ENCODE measurements at regions of chr6 and their contacts with region 1.

Region 1: GRCh38 chr6:75208298-75209183 is 2.7 kb upstream of the COL12A1 start:
- DNase-seq: no peak
- H3K4me3 ChIP-seq: peak overlapping the region; percentile 29 to 85 (median 42)
- H3K27ac ChIP-seq: peak overlapping the region; percentile 28 to 95 (median 77)
- H3K4me1 ChIP-seq: peaks cover 44 to 60% (median 55%) of the 10 kb centered on the region in 4 donors
- H3K27me3 ChIP-seq: peaks cover 0 to 6% (median 0%) of the 10 kb centered on the region in 4 donors
- CTCF ChIP-seq: peak; percentile 87 to 89 (median 88)
- EP300 ChIP-seq: no peak
- POLR2A ChIP-seq: no peak

Region 2: DNA sequence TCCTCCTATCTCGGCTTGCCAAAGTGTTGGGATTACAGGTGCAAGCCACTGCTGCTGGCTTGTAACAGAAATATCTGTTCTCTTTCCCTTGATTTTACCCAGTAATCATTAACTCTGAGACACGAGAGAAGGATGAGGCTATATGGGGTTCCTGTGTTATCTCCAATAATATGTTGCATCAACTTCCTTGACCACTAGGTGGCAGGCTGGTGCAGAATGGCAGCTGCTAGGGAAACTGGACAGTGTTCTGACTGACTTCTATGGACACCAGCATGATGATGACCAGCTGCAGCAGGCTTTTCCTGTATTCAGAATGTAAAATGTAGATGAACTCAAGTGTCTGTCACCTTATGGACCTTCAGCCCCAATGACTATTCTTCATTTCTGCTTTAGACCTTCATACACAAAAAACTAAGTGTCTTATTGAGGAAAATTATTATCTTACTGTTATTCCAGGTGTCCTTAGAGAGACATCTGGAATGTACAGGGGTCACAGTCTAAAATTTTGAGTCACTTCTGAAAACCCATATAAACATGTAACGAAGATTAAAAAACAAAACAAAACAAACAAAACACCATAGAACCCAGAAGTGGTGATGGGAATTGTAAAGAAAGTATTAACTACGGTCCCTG is 1533.0 kb before region 1 on chr6:
- intact Hi-C with region 1: loop called (anchors 5 kb)
- DNase-seq: peak; percentile 94
- H3K4me3 ChIP-seq: no peak overlapping the region
- H3K27ac ChIP-seq: no peak overlapping the region
- H3K4me1 ChIP-seq: peaks cover 0 to 3% (median 0%) of the 10 kb centered on the region in 4 donors
- H3K27me3 ChIP-seq: no peaks in the 10 kb centered on the region
- CTCF ChIP-seq: peak; percentile 83 to 90 (median 87)
- EP300 ChIP-seq: no peak
- POLR2A ChIP-seq: no peak

Region 3: DNA sequence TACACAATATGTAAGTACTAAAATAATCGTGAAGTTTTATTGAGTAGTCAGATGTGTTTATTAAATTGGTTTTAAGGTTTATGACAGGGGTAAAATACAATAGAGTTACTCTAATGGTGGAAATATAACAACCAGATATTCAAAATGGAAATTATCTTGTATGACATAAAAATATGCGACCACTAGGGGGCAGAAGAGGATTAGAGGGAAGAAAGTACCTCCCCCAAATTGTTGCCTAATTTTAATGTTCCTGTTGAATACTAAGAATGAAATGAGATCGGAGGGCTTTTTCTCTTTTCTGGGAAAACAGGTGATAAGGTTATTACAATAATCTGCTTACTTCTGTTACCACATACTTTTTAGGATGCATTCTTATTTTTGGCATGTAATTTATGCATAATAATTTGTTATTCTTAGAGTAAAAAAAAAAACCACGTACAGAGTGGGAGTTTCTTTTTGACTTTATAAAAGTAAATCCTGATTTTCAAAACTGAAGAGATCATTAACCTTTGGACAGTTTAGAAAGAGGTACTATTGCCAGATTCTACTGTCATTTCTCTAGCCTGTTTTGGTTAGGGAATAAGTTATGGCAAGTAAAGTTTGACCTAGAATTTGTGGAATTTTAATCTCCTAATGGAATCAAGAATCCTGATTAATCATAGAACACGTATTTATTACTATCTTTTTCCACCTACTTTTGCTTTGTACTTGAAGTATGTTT is 1353.4 kb before region 1 on chr6:
- intact Hi-C with region 1: loop called (anchors 2 kb)
- DNase-seq: no peak
- H3K4me3 ChIP-seq: peak overlapping the region; percentile 20 to 40 (median 27)
- H3K27ac ChIP-seq: peak overlapping the region; percentile 4 to 59 (median 46)
- H3K4me1 ChIP-seq: peaks cover 0 to 18% (median 12%) of the 10 kb centered on the region in 4 donors
- H3K27me3 ChIP-seq: no peaks in the 10 kb centered on the region
- CTCF ChIP-seq: peak; percentile 68 to 88 (median 85)
- EP300 ChIP-seq: no peak
- POLR2A ChIP-seq: no peak

Region 4: DNA sequence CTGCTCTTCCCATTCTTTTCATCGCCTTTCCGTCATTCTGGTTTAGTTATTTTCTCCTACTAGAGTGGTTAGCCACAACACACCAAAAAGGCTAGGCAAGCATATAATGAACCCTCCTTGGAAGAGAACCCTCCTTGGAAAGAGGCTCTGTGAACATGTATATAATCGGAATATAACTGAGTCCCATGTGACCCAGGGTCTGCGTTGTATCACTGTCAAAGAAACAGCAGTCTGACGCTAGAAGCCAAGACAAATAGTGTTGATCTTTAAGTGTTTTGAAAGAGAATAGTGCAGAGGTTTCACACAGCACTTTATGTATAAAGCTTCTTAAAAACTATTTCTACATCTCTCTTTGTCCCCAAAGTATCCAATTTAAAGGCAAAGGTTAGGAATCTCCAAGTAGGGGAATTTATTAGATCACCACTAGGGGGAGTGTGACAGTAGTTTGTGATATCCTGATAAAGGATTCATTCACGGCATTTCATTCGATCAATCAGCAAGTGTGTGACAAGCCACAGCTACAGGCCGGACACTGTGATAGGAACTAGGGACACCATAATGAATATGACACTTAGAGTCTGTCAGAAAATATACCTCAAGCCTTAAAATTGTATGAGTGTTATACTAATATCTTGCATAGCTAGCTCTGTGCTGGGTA is 1117.3 kb before region 1 on chr6:
- intact Hi-C with region 1: loop called (anchors 1 kb)
- DNase-seq: no peak
- H3K4me3 ChIP-seq: no peak overlapping the region
- H3K27ac ChIP-seq: peak overlapping the region in 2 of 4 donors; percentile 14 to 39
- H3K4me1 ChIP-seq: peaks cover 6 to 13% (median 13%) of the 10 kb centered on the region in 4 donors
- H3K27me3 ChIP-seq: no peaks in the 10 kb centered on the region
- CTCF ChIP-seq: peak; percentile 62 to 71 (median 67)
- EP300 ChIP-seq: no peak
- POLR2A ChIP-seq: no peak

Region 5: DNA sequence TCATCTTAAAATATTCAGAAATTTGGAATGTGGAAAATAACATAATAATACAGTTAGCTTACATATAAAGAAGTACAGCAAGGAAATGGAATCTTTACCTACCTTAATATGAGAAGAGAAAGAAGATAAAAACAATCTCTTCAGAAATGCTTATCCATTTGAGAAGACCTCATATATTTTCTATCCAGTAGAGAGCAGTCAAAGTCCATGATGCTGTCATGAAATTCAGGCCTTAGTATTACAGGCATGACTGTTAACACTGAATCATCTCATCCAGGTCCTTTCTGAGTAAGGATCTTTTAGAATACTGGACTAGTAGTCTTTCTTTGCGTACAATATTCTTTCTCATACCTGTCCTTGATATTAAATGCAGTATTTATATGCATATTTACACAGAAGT is 799.1 kb before region 1 on chr6:
- intact Hi-C with region 1: loop called (anchors 2 kb)
- DNase-seq: no peak
- H3K4me3 ChIP-seq: no peak overlapping the region
- H3K27ac ChIP-seq: peak overlapping the region in 1 of 4 donors; percentile 17
- H3K4me1 ChIP-seq: peaks cover 0 to 9% (median 0%) of the 10 kb centered on the region in 4 donors
- H3K27me3 ChIP-seq: no peaks in the 10 kb centered on the region
- CTCF ChIP-seq: peak; percentile 62 to 69 (median 63)
- EP300 ChIP-seq: no peak
- POLR2A ChIP-seq: no peak

Region 6: GRCh38 chr6:74768120-74768519 is 440.4 kb before region 1 on chr6:
- intact Hi-C with region 1: loop called (anchors 10 kb)
- DNase-seq: no peak
- H3K4me3 ChIP-seq: no peak overlapping the region
- H3K27ac ChIP-seq: no peak overlapping the region
- H3K4me1 ChIP-seq: no peaks in the 10 kb centered on the region
- H3K27me3 ChIP-seq: no peaks in the 10 kb centered on the region
- CTCF ChIP-seq: no peak
- EP300 ChIP-seq: no peak
- POLR2A ChIP-seq: no peak

Region 7: DNA sequence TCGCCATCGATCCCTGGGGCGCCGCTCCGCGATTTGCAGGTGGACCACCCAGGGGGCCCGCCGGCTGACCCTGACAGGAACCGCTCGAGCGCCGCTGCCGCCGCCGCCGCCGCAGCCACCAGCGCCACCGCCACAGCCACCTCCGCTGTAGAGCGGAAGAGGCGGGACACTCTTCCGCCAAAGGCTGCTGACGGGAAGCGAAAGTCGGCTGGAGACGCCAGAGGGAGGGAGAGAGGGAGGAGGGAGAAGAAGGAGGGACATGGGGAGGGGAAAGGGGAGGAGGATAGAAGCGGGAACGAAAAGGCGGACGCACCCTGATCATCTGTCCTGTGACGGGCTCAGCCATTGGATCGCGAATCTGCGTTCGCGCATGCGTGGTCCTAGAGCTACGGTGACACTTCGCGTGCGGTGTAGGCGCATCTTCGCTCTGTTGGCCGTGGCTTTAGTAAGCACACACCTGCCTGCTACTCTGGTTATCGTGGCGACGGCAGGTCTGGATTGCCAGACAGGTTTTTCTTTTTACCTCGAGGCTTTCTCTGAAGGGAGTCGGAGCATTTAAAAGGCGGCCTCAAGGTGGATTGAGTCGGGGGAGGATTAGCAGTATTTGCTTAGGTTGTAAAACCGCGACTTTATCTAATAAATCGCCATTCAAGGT is 76.2 kb after region 1 on chr6 and contains the start of gene TMEM30A:
- intact Hi-C with region 1: no loop called
- DNase-seq: peak; percentile 99
- H3K4me3 ChIP-seq: peak within 1 kb of the TSS; percentile 76 to 94 (median 84)
- H3K27ac ChIP-seq: peak within 1 kb of the TSS; percentile 89 to 93 (median 92)
- H3K4me1 ChIP-seq: peaks cover 31 to 56% (median 51%) of the 10 kb centered on the region in 4 donors
- H3K27me3 ChIP-seq: no peaks in the 10 kb centered on the region
- CTCF ChIP-seq: peak in 1 of 3 experiments; percentile 6
- EP300 ChIP-seq: no peak
- POLR2A ChIP-seq: peak; percentile 91
- total RNA-seq, gene TMEM30A: 87.6 to 102 (median 91.9) TPM